Activated CD4-positive, alpha-beta T cell treated with anti-CD3 and anti-CD28 coated beads for 36 hours (primary cell): ENCODE measurements at regions of chr10 and their contacts with region 1.

Region 1: DNA sequence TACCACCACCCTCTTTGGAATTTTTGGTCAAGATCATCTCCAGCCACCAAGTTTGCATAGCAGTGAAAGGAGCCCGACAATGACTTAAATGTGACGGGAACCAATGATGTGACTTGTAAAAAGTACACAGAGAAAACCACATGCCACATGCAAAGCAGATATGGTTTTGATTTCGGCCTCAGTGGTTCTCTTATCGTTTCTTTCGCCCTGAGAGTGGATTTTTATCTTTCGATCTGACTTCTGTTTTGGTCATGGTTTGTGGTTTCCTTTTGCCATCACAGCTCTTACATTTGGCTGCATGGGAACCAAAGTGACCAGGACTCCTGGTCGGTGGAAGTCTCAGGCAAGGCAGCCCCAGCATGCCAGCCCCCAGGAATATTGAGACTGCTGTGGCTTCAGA is 31.5 kb downstream of the TCF7L2 start:
- DNase-seq: peak; percentile 68
- ATAC-seq: peak; percentile 61
- H3K4me3 Mint-ChIP-seq: no peak overlapping the region
- H3K27ac Mint-ChIP-seq: no peak overlapping the region
- H3K4me1 Mint-ChIP-seq: peaks cover 27% of the 10 kb centered on the region
- H3K27me3 Mint-ChIP-seq: peaks cover 63% of the 10 kb centered on the region

Region 2: GRCh38 chr10:112526139-112526538 is 455.4 kb before region 1 on chr10:
- CTCF ChIA-PET with region 1: no interaction called
- POLR2A ChIA-PET with region 1: no interaction called
- intact Hi-C with region 1: loop called (anchors 2 to 5 kb)
- DNase-seq: peak; percentile 23
- ATAC-seq: peak; percentile 94
- H3K4me3 Mint-ChIP-seq: no peak overlapping the region
- H3K27ac Mint-ChIP-seq: no peak overlapping the region
- H3K4me1 Mint-ChIP-seq: peaks cover 35% of the 10 kb centered on the region
- H3K27me3 Mint-ChIP-seq: no peaks in the 10 kb centered on the region

Region 3: GRCh38 chr10:112949875-112950507 is 31.6 kb before region 1 on chr10 and contains the start of gene TCF7L2:
- CTCF ChIA-PET with region 1: no interaction called
- POLR2A ChIA-PET with region 1: no interaction called
- intact Hi-C with region 1: loop called (anchors 1 kb)
- DNase-seq: peak; percentile 58
- ATAC-seq: peak; percentile 30
- H3K4me3 Mint-ChIP-seq: peak within 1 kb of the TSS; percentile 86
- H3K27ac Mint-ChIP-seq: peak within 1 kb of the TSS; percentile 86
- H3K4me1 Mint-ChIP-seq: peaks cover 24% of the 10 kb centered on the region
- H3K27me3 Mint-ChIP-seq: peaks cover 51% of the 10 kb centered on the region
- total RNA-seq, gene TCF7L2: 0.87 to 1.7 TPM

Region 4: GRCh38 chr10:113058523-113058961 is 77.0 kb after region 1 on chr10:
- CTCF ChIA-PET with region 1: no interaction called
- POLR2A ChIA-PET with region 1: no interaction called
- intact Hi-C with region 1: no loop called
- DNase-seq: no peak
- ATAC-seq: no peak
- H3K4me3 Mint-ChIP-seq: no peak overlapping the region
- H3K27ac Mint-ChIP-seq: no peak overlapping the region
- H3K4me1 Mint-ChIP-seq: no peaks in the 10 kb centered on the region
- H3K27me3 Mint-ChIP-seq: peaks cover 4% of the 10 kb centered on the region

Region 5: DNA sequence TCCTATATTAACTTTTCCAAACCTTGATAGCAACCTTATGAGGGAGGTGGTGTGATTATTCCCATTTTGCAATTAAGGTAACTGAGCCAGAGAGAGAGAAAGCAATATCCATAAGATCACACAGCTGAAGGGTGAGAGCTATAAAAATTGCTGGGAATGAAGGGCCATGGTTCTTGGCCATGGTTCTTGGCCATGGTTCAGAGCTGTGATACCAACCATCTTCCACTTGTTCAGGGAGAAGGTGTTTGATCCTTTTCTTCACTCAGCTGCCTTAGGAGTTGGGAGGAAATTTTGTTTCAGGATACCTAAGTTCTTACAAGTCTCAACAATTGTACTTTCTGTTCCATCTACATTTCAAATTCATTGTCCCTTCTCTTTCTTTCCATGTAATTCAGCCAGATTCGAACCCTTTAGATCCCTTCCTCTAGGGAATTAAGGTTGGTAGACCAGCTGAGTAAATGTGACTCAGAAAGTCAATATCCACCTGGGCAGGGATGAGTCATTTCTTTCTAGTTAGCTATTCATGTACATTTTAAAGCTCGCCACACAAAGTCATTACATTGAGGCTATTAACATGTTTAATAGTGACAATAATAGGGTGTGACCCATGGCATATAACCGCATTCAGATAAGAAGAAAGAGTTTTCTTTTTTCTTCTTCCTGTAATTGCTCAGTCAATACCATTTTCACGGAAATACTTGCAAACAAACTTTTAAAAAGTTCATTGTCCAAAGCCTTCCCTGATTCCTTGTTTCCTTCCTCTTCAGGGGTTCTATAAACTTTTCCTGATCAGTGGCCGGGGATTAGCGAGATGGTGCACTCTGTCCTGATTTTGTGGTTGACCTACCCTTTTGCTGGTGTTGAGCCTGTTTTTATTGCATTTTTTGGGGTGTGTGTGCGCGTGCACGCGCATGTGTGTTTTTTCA is 111.9 kb after region 1 on chr10:
- CTCF ChIA-PET with region 1: no interaction called
- POLR2A ChIA-PET with region 1: no interaction called
- intact Hi-C with region 1: loop called in 1 of 2 experiments (anchors 10 kb)
- DNase-seq: no peak
- ATAC-seq: peak; percentile 57
- H3K4me3 Mint-ChIP-seq: no peak overlapping the region
- H3K27ac Mint-ChIP-seq: peak overlapping the region; percentile 48
- H3K4me1 Mint-ChIP-seq: peaks cover 17% of the 10 kb centered on the region
- H3K27me3 Mint-ChIP-seq: no peaks in the 10 kb centered on the region

Region 6: GRCh38 chr10:113678690-113679462 is 697.3 kb after region 1 on chr10:
- CTCF ChIA-PET with region 1: no interaction called
- POLR2A ChIA-PET with region 1: no interaction called
- intact Hi-C with region 1: loop called in 1 of 2 experiments (anchors 10 kb)
- DNase-seq: peak; percentile 84
- ATAC-seq: peak; percentile 16
- H3K4me3 Mint-ChIP-seq: peak overlapping the region; percentile 80
- H3K27ac Mint-ChIP-seq: peak overlapping the region; percentile 74
- H3K4me1 Mint-ChIP-seq: peaks cover 39% of the 10 kb centered on the region
- H3K27me3 Mint-ChIP-seq: peaks cover 5% of the 10 kb centered on the region